CD14-positive monocyte (primary cell): ENCODE measurements at regions of chr16 and their contacts with region 1.

Region 1: DNA sequence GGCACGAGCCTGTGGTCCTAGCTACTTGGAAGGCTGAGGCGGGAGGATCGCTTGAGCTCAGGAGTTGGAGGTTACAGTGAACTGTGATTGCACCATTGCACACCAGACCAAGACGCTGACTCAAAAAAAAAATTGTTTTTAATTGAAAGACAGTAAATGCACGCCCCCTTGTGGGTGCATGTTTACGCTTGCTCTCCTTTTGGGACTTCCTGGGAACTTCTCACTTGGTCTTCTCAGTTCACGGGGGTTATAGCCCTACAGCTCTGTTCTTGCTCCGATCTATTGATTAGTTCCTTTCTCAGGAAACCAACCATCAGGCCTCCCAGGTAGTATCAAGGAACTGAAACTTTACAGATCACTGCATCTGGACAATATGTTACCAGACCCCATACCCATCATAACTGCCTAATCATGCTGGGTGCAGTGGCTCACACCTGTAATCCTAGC is 14.2 kb upstream of the RIPOR1 start:
- DNase-seq: peak; percentile 87 to 96 (median 91)
- H3K4me3 ChIP-seq: peak overlapping the region in 1 of 3 experiments; percentile 40
- H3K4me3 Mint-ChIP-seq: peak overlapping the region in 1 of 2 donors; percentile 39
- H3K27ac ChIP-seq: peak overlapping the region in 1 of 2 donors; percentile 45
- H3K27ac Mint-ChIP-seq: peak overlapping the region in 6 of 7 donors; percentile 62 to 88 (median 68)
- H3K4me1 ChIP-seq: peaks cover 42 to 44% of the 10 kb centered on the region in 2 donors
- H3K4me1 Mint-ChIP-seq: peaks cover 37% of the 10 kb centered on the region
- H3K27me3 ChIP-seq: no peaks in the 10 kb centered on the region
- H3K27me3 Mint-ChIP-seq: peaks cover 0 to 3% (median 0%) of the 10 kb centered on the region in 3 donors
- CTCF ChIP-seq: peak; percentile 80

Region 2: DNA sequence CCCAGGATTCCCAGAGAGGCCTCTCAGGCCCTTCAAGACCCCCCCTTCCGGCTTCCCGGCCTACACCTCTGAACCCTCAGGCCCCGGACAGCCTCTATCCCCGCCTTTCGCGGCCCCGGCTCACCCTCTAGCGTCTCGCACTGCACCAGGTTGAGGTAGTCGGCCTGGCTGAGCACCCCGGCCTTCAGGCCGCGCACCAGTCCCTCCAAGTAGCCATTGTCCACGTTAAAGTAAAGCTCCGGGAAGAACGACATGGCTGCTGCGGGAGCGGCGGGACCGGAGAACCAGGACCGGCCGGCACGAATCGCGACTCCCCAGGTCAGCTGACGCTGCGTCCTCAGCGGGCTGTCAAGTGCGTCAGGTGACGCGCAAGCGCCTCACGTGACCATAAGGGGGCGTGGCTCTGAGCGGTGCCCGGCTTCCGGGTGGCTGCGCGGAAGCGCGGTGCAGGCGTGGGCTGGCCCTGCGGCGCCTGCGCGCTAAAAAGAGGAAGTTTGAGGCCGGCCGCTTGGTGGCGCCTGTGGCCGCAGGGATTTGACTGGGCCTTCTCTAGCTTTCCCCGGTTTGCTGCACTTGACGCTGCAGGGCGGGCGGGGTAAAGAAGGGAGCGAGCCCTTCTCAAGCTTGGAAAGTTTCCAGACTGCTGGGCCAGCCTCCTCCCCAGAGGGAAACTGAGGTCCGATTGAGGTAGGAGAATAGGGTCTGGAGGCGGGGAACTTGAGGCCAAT is 33.4 kb before region 1 on chr16 and contains the start of gene ATP6V0D1:
- intact Hi-C with region 1: loop called in 1 of 2 experiments (anchors 5 kb)
- DNase-seq: peak; percentile 98 to 100 (median 99)
- H3K4me3 ChIP-seq: peak within 1 kb of the TSS; percentile 67 to 98 (median 84)
- H3K4me3 Mint-ChIP-seq: peak within 1 kb of the TSS; percentile 98
- H3K27ac ChIP-seq: peak within 1 kb of the TSS; percentile 98 to 99
- H3K27ac Mint-ChIP-seq: peak within 1 kb of the TSS; percentile 99 to 100 (median 100)
- H3K4me1 ChIP-seq: peaks cover 69 to 89% of the 10 kb centered on the region in 2 donors
- H3K4me1 Mint-ChIP-seq: peaks cover 78% of the 10 kb centered on the region
- H3K27me3 ChIP-seq: no peaks in the 10 kb centered on the region
- H3K27me3 Mint-ChIP-seq: peaks cover 0 to under 1% (median 0%) of the 10 kb centered on the region in 3 donors
- CTCF ChIP-seq: peak; percentile 76
- polyA plus RNA-seq, gene ATP6V0D1: 354 to 687 (median 631) TPM

Region 3: DNA sequence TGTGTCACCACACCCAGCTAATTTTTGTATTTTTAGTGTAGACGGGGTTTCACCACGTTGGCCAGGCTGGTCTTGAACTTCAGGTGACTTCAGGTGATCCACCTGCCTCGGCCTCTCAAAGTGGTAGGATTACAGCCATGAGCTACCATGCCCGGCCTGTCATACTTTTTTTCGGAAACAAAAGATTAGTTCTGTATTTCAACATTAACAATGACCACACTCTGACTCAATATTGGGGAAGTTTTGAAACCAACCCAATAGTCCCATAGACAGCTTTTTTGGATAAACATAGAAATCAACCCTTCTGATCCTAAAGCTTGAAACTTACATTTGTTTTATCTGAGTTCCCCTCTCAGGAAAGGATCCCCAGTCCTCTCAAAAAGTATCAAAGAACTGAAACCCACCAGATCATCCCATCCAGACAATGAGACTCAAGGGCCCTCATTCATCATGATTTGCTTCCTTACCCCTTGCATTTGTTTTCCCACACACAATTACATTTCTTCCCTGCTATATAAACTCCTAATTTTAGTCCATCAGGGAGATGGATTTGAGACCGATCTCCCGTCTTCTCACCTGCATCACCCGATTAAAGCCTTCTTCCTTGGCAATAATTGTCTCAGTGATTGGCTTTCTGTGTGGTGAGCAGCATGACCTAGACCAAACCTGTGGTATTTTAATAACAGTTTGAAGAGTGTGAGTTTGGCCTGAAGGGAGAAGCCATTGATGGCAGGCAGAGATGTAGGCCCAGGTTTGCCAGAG is 23.9 kb before region 1 on chr16:
- intact Hi-C with region 1: loop called (anchors 2 kb)
- DNase-seq: peak; percentile 78 to 93 (median 87)
- H3K4me3 ChIP-seq: peak overlapping the region in 1 of 3 experiments; percentile 71
- H3K4me3 Mint-ChIP-seq: peak overlapping the region; percentile 59 to 82
- H3K27ac ChIP-seq: peak overlapping the region; percentile 90 to 97
- H3K27ac Mint-ChIP-seq: peak overlapping the region; percentile 98 to 100 (median 99)
- H3K4me1 ChIP-seq: peaks cover 84 to 93% of the 10 kb centered on the region in 2 donors
- H3K4me1 Mint-ChIP-seq: peaks cover 84% of the 10 kb centered on the region
- H3K27me3 ChIP-seq: no peaks in the 10 kb centered on the region
- H3K27me3 Mint-ChIP-seq: peaks cover 0 to 7% (median 0%) of the 10 kb centered on the region in 3 donors
- CTCF ChIP-seq: no peak

Region 4: GRCh38 chr16:67499106-67499505 is 15.3 kb before region 1 on chr16:
- intact Hi-C with region 1: loop called in 1 of 2 experiments (anchors 2 kb)
- DNase-seq: no peak
- H3K4me3 ChIP-seq: no peak overlapping the region
- H3K4me3 Mint-ChIP-seq: no peak overlapping the region
- H3K27ac ChIP-seq: no peak overlapping the region
- H3K27ac Mint-ChIP-seq: peak overlapping the region in 2 of 7 donors; percentile 41 to 67
- H3K4me1 ChIP-seq: peaks cover 13 to 21% of the 10 kb centered on the region in 2 donors
- H3K4me1 Mint-ChIP-seq: peaks cover 28% of the 10 kb centered on the region
- H3K27me3 ChIP-seq: no peaks in the 10 kb centered on the region
- H3K27me3 Mint-ChIP-seq: peaks cover 0 to 3% (median 2%) of the 10 kb centered on the region in 3 donors
- CTCF ChIP-seq: no peak